CD4-positive, alpha-beta T cell (primary cell): ENCODE measurements at regions of chr11 and their contacts with region 1.

Region 1: DNA sequence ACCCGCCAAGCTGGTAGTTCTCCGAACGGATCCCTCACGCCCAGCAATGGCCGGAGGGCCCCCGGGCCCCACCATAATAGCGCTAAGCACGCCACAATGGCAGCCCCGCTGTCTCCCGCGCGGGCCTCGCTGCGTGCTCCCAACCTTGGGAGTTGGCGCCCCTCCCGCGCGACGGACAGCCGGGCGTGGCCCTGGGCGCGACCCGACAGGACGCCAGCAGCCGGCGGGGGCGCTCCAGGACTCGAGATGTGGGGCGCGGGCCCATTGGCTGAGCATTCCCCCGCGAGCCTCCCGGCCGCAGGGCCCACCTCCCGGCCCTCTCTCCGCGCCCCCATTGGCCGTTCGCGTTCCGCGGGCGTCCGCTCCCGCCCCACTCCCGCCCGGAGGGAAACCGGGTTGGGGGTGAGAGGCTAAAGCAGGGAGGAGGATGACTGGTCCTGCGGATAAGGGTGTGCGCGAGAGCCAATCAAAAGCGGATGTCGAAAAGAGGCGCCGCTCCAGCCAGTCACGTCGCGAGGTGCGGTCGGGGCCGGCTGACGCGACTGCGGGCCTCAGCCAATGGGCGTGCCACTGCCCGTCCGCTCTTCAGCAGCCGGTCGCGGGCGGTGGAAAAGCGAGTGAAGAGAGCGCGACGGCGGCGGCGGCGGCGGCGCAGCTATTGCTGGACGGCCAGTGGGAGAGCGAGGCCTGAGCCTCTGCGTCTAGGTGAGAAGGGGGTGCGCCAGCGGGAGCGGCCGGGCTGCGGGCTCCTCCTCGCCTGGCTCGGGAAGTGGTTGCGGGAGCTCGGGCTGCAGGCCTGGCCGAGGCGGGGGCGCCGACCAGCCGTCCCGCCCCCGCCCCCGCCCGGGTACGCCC is at the start of gene FAR1:
- DNase-seq: peak; percentile 90 to 98 (median 94)
- ATAC-seq: peak; percentile 88
- H3K4me3 ChIP-seq: peak within 1 kb of the TSS; percentile 85
- H3K4me3 Mint-ChIP-seq: peak within 1 kb of the TSS; percentile 98
- H3K27ac ChIP-seq: peak within 1 kb of the TSS; percentile 33 to 47
- H3K27ac Mint-ChIP-seq: peak within 1 kb of the TSS; percentile 88
- H3K4me1 ChIP-seq: peaks cover 28% of the 10 kb centered on the region
- H3K4me1 Mint-ChIP-seq: peaks cover 51% of the 10 kb centered on the region
- H3K27me3 ChIP-seq: no peaks in the 10 kb centered on the region
- H3K27me3 Mint-ChIP-seq: peaks cover 8% of the 10 kb centered on the region
- CTCF ChIP-seq: peak; percentile 70
- total RNA-seq, gene FAR1: 28.4 to 29.0 TPM

Region 2: DNA sequence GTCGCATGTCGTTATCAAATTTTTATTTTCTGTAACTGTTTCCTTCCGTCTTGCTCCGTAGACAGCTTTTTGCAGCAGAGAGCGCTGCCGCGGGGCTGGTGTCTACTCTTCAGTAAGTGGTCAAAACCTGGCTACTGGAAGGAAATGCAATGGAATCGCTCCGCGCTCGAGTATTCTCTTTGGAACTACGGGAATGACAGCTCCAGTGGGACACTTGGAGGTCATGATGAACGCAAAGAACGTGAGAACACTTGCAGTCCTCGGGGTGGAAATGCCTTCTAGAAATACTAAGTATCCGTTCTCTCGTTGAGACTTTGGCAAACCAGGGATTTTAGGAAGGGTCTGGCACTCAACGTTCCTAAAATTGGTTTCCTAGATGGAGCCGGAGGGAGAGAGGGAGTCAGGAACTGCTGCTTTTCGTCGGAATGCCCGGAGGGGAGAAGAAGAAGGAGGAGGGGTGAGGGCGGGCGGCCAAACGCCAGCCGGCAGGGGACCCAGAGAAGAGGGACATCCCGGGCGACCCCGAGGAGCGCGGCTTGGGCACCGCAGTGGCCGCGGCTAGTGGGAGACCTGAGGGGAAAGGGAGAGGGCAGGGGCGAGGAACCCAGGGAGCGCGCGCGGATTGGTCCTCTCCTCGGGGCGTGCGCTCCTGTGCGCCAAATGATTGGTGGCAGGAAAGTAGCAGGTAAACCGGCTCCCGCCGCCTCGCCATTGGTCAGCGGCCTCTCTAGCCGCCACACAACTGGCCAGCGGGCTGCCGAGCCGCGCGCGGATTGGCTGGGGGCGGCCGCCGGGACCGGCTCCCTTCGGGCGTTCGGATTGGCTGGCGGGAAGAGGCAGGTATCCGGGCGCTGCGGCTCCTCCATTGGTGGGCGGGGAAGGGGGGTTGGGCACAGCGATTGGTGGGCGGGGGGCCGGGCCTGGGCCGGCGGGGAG is 391.2 kb before region 1 on chr11:
- CTCF ChIA-PET with region 1: no interaction called
- POLR2A ChIA-PET with region 1: no interaction called
- intact Hi-C with region 1: loop called in 1 of 2 experiments (anchors 5 kb)
- DNase-seq: peak; percentile 95 to 98 (median 97)
- ATAC-seq: peak; percentile 84
- H3K4me3 ChIP-seq: peak overlapping the region; percentile 98
- H3K4me3 Mint-ChIP-seq: peak overlapping the region; percentile 97
- H3K27ac ChIP-seq: peak overlapping the region; percentile 29 to 66
- H3K27ac Mint-ChIP-seq: peak overlapping the region; percentile 85
- H3K4me1 ChIP-seq: peaks cover 34% of the 10 kb centered on the region
- H3K4me1 Mint-ChIP-seq: peaks cover 49% of the 10 kb centered on the region
- H3K27me3 ChIP-seq: no peaks in the 10 kb centered on the region
- H3K27me3 Mint-ChIP-seq: no peaks in the 10 kb centered on the region
- CTCF ChIP-seq: no peak

Region 3: GRCh38 chr11:13638422-13638821 is 29.9 kb before region 1 on chr11:
- CTCF ChIA-PET with region 1: no interaction called
- POLR2A ChIA-PET with region 1: no interaction called
- intact Hi-C with region 1: no loop called
- DNase-seq: no peak
- ATAC-seq: no peak
- H3K4me3 ChIP-seq: no peak overlapping the region
- H3K4me3 Mint-ChIP-seq: no peak overlapping the region
- H3K27ac ChIP-seq: no peak overlapping the region
- H3K27ac Mint-ChIP-seq: no peak overlapping the region
- H3K4me1 ChIP-seq: no peaks in the 10 kb centered on the region
- H3K4me1 Mint-ChIP-seq: no peaks in the 10 kb centered on the region
- H3K27me3 ChIP-seq: peaks cover 0 to 10% of the 10 kb centered on the region in 2 experiments
- H3K27me3 Mint-ChIP-seq: peaks cover 47% of the 10 kb centered on the region
- CTCF ChIP-seq: no peak

Region 4: DNA sequence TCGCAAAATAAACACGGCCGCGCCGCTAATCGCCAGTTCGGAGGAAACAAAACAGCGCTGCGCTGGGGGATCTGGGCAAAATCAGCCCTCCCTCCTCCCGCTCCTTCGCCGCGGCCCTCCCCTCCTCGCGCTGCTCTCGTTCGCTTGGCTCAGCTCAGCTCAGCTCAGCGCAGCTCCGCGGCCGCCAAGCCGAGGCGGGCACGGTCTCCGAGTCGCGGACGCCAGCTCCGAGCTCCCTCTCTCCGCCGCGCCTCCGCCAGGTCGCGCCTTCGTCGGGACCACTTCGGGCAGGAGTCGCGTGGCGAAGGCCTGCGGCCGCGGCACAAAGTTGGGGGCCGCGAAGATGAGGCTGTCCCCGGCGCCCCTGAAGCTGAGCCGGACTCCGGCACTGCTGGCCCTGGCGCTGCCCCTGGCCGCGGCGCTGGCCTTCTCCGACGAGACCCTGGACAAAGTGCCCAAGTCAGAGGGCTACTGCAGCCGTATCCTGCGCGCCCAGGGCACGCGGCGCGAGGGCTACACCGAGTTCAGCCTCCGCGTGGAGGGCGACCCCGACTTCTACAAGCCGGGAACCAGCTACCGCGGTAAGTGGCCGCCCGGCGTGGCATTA is 294.3 kb after region 1 on chr11 and contains the start of gene SPON1:
- CTCF ChIA-PET with region 1: no interaction called
- POLR2A ChIA-PET with region 1: interaction called, 4 read pairs
- intact Hi-C with region 1: loop called in 1 of 2 experiments (anchors 10 kb)
- DNase-seq: peak; percentile 30 to 74 (median 52)
- ATAC-seq: peak; percentile 84
- H3K4me3 ChIP-seq: peak within 1 kb of the TSS; percentile 45
- H3K4me3 Mint-ChIP-seq: peak within 1 kb of the TSS; percentile 83
- H3K27ac ChIP-seq: no peak within 1 kb of the TSS
- H3K27ac Mint-ChIP-seq: no peak within 1 kb of the TSS
- H3K4me1 ChIP-seq: peaks cover 24% of the 10 kb centered on the region
- H3K4me1 Mint-ChIP-seq: peaks cover 13% of the 10 kb centered on the region
- H3K27me3 ChIP-seq: peaks cover 33 to 59% of the 10 kb centered on the region in 2 experiments
- H3K27me3 Mint-ChIP-seq: peaks cover 75% of the 10 kb centered on the region
- CTCF ChIP-seq: no peak
- total RNA-seq, gene SPON1: 2.1 to 2.2 TPM

Region 5: GRCh38 chr11:14358729-14359439 is 690.6 kb after region 1 on chr11 and contains the start of gene RRAS2:
- CTCF ChIA-PET with region 1: no interaction called
- POLR2A ChIA-PET with region 1: no interaction called
- intact Hi-C with region 1: loop called in 1 of 2 experiments (anchors 5 kb)
- DNase-seq: peak; percentile 65 to 90 (median 74)
- ATAC-seq: peak; percentile 95
- H3K4me3 ChIP-seq: peak within 1 kb of the TSS; percentile 69
- H3K4me3 Mint-ChIP-seq: peak within 1 kb of the TSS; percentile 92
- H3K27ac ChIP-seq: no peak within 1 kb of the TSS
- H3K27ac Mint-ChIP-seq: peak within 1 kb of the TSS; percentile 75
- H3K4me1 ChIP-seq: peaks cover 13% of the 10 kb centered on the region
- H3K4me1 Mint-ChIP-seq: peaks cover 30% of the 10 kb centered on the region
- H3K27me3 ChIP-seq: no peaks in the 10 kb centered on the region
- H3K27me3 Mint-ChIP-seq: no peaks in the 10 kb centered on the region
- CTCF ChIP-seq: no peak
- total RNA-seq, gene RRAS2: 20.7 to 21.2 TPM